ENCODE measurements at regions of chr2 and their contacts with region 1.

Region 1: GRCh38 chr2:28960401-28960800 is 20.7 kb upstream of the TOGARAM2 start:
- DNase-seq: no peak
- H3K4me3 ChIP-seq: no peak overlapping the region
- H3K27ac ChIP-seq: no peak overlapping the region
- H3K4me1 ChIP-seq: no peaks in the 10 kb centered on the region
- H3K27me3 ChIP-seq: no peaks in the 10 kb centered on the region
- CTCF ChIP-seq: no peak
- POLR2A ChIP-seq: no peak

Region 2: DNA sequence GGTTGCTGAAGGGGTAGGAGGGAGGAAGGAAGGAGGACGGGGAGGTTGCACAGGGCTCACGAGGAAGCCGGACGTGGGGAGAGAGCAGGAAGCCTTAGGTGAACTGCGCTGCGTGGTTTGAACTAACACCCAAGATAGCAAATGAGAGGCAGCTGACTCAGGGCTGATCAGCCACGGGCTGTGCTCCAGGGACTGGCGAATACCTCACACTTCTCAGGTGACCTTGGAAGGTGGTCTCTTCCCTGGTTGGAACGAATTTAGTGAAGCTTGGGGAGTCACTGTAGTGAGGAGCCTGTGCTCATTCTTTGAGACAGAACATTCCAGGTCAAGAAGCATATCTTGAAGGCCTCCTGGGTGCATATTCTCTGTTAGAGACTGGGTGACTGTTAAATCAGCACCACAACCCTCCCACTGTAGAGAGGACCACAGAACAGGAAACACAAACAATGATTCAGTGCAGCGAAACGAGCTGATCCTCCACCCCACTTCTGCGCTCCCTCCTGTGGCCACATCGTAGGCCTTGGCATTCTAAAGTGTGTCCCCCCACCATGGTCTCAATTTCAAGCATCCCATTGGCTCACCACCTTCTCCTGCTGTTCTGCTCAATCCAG is 54.5 kb after region 1 on chr2:
- intact Hi-C with region 1: no loop called
- DNase-seq: peak; percentile 37
- H3K4me3 ChIP-seq: no peak overlapping the region
- H3K27ac ChIP-seq: peak overlapping the region; percentile 14 to 57
- H3K4me1 ChIP-seq: peaks cover 44% of the 10 kb centered on the region
- H3K27me3 ChIP-seq: no peaks in the 10 kb centered on the region
- CTCF ChIP-seq: no peak
- POLR2A ChIP-seq: no peak

Region 3: GRCh38 chr2:29187926-29188325 is 227.5 kb after region 1 on chr2:
- intact Hi-C with region 1: loop called (anchors 10 kb)
- DNase-seq: no peak
- H3K4me3 ChIP-seq: no peak overlapping the region
- H3K27ac ChIP-seq: no peak overlapping the region
- H3K4me1 ChIP-seq: no peaks in the 10 kb centered on the region
- H3K27me3 ChIP-seq: no peaks in the 10 kb centered on the region
- CTCF ChIP-seq: no peak
- POLR2A ChIP-seq: no peak

Measured in testis (tissue), 5 donors.